ENCODE measurements at regions of chr3 and their contacts with region 1.

Region 1: GRCh38 chr3:32781210-32781968 is 36.4 kb upstream of the TRIM71 start:
- DNase-seq: no peak
- H3K4me3 ChIP-seq: peak overlapping the region; percentile 65
- CTCF ChIP-seq: peak; percentile 88

Region 2: GRCh38 chr3:32684800-32685542 is 96.4 kb before region 1 on chr3 and contains the start of gene CNOT10:
- CTCF ChIA-PET with region 1: no interaction called
- POLR2A ChIA-PET with region 1: no interaction called
- DNase-seq: peak; percentile 34
- H3K4me3 ChIP-seq: peak within 1 kb of the TSS; percentile 89
- CTCF ChIP-seq: peak; percentile 44

Region 3: GRCh38 chr3:32758375-32758753 is 23.0 kb before region 1 on chr3:
- CTCF ChIA-PET with region 1: interaction called, 22 read pairs
- POLR2A ChIA-PET with region 1: no interaction called
- DNase-seq: no peak
- H3K4me3 ChIP-seq: no peak overlapping the region
- CTCF ChIP-seq: no peak

Region 4: DNA sequence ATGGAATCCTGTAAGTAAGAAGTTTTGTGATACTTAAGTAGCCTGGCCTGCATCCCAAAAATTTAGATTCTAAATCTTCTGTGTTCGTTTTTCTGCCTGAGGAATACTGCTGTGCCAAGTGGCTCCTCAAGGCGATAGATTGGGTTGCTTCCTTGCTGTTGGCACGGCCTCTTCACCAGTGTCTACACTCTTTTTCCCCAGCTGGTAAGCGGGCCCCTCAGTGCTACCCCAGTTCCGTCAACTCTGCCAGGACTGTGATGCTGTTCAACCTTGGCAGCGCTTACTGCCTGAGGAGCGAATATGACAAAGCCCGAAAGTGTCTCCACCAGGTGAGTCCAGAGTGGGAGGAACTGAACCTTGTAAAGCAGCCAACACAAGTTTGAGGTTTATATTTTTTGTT is 16.9 kb before region 1 on chr3:
- CTCF ChIA-PET with region 1: interaction called, 38 read pairs
- POLR2A ChIA-PET with region 1: no interaction called
- DNase-seq: no peak
- H3K4me3 ChIP-seq: no peak overlapping the region
- CTCF ChIP-seq: no peak

Region 5: DNA sequence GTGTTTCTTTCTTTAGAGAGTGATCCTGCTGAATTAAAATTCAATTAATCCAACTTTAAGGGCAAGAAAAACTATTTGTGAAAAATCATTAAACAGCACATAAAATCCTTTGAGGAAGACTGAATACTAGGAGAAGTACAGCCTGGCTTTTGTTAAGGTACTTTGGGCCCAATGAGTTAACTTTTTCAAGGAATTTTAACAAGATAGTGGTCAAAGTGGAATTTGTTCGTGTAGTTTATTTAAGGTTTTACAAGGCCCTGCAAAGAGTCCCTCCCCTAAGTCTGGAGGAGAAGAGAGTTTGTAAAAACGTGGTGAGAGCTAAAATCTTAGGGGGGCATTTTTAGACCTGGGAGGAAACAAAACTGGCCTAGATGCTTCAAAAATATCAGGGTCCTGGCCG is 10.4 kb after region 1 on chr3:
- CTCF ChIA-PET with region 1: interaction called, 15 read pairs
- POLR2A ChIA-PET with region 1: no interaction called
- DNase-seq: no peak
- H3K4me3 ChIP-seq: no peak overlapping the region
- CTCF ChIP-seq: no peak

Region 6: GRCh38 chr3:32882603-32883025 is 101.2 kb after region 1 on chr3:
- CTCF ChIA-PET with region 1: no interaction called
- POLR2A ChIA-PET with region 1: no interaction called
- DNase-seq: no peak
- H3K4me3 ChIP-seq: no peak overlapping the region
- CTCF ChIP-seq: no peak

Measured in AG04449 (cell line).